ENCODE measurements at regions of chr11 and their contacts with region 1.

Region 1: DNA sequence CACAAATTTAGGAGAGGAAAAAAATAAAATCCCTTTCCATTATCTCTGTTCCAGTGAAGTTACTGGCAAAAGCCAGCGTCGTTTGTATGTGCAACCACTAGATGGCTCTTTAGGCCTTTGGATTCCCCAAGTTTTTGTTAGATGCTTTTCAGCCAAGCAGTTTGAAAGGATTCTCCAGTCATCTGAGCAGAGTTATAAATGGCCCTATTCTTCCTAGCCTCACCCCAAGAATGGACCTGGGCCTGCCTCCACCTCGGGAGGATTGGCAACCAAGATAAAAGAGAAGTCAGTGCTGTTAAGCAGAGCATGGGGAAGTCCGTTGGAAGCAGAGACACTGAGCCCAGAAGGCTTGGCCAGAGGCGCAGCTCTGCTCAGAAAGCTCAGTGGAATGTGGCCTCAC is 15.4 kb downstream of the FAM181B start:
- H3K4me3 ChIP-seq: no peak overlapping the region
- H3K27ac ChIP-seq: no peak overlapping the region
- H3K4me1 ChIP-seq: no peaks in the 10 kb centered on the region
- CTCF ChIP-seq: no peak

Region 2: DNA sequence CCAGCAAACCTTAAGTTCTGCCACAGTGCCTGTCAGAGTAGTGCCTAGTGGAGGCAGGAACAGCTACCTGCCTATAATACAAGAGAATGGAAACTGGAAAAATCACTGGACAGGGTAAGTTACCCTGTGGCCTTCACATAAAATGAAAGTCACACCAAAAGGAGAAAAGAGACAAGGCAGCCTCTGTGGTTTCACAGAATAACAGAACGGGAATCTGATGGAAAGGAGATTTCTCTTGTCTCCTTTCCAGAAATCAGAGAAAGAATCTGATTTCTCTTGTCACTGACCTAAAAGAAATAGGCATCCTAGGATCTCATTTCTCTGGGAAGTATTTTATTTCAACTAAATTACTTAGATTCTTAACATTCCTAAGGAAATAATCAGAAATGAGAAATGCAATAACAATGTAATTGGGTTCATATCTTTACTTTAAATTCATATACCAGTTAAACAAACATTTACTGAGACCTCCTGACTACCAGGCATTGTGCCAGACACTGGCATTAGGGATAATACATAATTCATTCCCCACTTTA is 140.3 kb after region 1 on chr11:
- CTCF ChIA-PET with region 1: interaction called, 16 read pairs
- POLR2A ChIA-PET with region 1: no interaction called
- H3K4me3 ChIP-seq: no peak overlapping the region
- H3K27ac ChIP-seq: no peak overlapping the region
- H3K4me1 ChIP-seq: peaks cover 2% of the 10 kb centered on the region; the same call in 1 of the 2 replicates
- CTCF ChIP-seq: no peak